ENCODE measurements at regions of chr9 and their contacts with region 1.

Region 1: GRCh38 chr9:32866273-32866672 is 82.9 kb downstream of the TMEM215 start:
- DNase-seq: no peak
- ATAC-seq: no peak
- H3K4me3 ChIP-seq: no peak overlapping the region
- H3K27ac ChIP-seq: no peak overlapping the region
- H3K4me1 ChIP-seq: peaks cover 0 to 8% (median 0%) of the 10 kb centered on the region in 9 donors
- H3K27me3 ChIP-seq: peaks cover 0 to 4% (median 0%) of the 10 kb centered on the region in 7 donors
- CTCF ChIP-seq: no peak

Region 2: GRCh38 chr9:32783169-32783891 is 82.9 kb before region 1 on chr9 and contains the start of gene TMEM215:
- intact Hi-C with region 1: loop called in 1 of 10 experiments (anchors 10 kb)
- DNase-seq: no peak
- ATAC-seq: peak in 2 of 8 donors; percentile 16 to 37
- H3K4me3 ChIP-seq: peak within 1 kb of the TSS in 6 of 10 donors; percentile 14 to 39 (median 22)
- H3K27ac ChIP-seq: no peak within 1 kb of the TSS
- H3K4me1 ChIP-seq: peaks cover 0 to 11% (median 0%) of the 10 kb centered on the region in 9 donors
- H3K27me3 ChIP-seq: peaks cover 8 to 73% (median 62%) of the 10 kb centered on the region in 7 donors
- CTCF ChIP-seq: no peak
- total RNA-seq, gene TMEM215: not detected

Measured in heart right ventricle (tissue), 16 donors.